Right cardiac atrium (tissue), 5 donors: ENCODE measurements at regions of chr22 and their contacts with region 1.

Region 1: DNA sequence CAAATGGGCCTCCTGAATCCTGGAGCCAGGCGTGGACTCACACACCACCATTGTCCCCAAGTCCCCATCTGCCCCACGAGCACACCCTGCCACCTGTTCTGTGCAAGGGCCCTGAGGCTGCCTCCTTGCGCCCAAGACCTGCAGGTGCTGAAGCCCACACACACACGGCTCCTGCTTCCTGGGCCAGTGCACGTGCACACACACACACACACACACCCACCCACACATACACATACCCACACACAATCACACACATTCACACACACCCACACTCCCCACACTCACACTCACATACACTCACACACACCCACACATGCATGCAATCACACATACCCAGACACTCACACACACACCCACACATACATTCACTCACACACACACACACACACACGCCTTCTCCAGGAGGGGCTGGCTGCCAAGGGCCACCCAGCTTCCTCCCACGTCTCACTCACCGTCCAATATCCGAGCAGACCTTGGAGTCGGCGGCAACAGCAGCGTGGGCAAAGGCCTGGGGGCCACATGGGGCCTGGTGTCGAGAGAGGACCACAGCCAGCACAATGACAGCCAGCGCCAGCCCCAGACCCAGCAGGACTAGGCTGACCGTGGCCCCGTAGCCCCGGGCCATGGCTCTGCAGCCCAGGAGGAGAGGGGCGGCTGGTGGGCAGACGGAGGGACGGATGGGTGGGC is 638 bp downstream of the GGT5 start:
- DNase-seq: peak; percentile 58 to 81 (median 80)
- ATAC-seq: peak; percentile 19 to 40
- H3K4me3 ChIP-seq: peak overlapping the region; percentile 11
- H3K27ac ChIP-seq: peak overlapping the region; percentile 71
- H3K4me1 ChIP-seq: peaks cover 5% of the 10 kb centered on the region
- H3K27me3 ChIP-seq: no peaks in the 10 kb centered on the region

Region 2: DNA sequence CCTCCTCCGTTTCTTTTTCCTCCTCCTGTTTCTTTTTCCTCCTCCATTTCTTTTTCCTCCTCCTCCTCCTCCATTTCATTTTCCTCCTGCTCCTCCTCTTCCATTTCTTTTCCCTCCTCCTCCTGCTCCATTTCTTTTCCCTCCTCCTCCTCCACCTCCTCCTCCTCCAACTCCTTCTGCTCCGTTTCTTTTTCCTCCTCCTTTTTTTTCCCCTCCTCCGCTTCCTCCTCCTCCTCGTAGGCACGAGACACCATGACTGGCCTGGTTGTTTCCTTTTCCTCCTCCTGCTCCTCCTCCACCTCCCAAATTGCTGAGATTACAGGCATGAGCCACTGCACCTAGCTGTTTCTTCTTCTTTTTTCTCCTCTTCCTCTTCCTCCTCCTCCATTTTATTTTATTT is 586.5 kb before region 1 on chr22:
- intact Hi-C with region 1: no loop called
- DNase-seq: no peak
- ATAC-seq: no peak
- H3K4me3 ChIP-seq: no peak overlapping the region
- H3K27ac ChIP-seq: no peak overlapping the region
- H3K4me1 ChIP-seq: no peaks in the 10 kb centered on the region
- H3K27me3 ChIP-seq: no peaks in the 10 kb centered on the region

Region 3: DNA sequence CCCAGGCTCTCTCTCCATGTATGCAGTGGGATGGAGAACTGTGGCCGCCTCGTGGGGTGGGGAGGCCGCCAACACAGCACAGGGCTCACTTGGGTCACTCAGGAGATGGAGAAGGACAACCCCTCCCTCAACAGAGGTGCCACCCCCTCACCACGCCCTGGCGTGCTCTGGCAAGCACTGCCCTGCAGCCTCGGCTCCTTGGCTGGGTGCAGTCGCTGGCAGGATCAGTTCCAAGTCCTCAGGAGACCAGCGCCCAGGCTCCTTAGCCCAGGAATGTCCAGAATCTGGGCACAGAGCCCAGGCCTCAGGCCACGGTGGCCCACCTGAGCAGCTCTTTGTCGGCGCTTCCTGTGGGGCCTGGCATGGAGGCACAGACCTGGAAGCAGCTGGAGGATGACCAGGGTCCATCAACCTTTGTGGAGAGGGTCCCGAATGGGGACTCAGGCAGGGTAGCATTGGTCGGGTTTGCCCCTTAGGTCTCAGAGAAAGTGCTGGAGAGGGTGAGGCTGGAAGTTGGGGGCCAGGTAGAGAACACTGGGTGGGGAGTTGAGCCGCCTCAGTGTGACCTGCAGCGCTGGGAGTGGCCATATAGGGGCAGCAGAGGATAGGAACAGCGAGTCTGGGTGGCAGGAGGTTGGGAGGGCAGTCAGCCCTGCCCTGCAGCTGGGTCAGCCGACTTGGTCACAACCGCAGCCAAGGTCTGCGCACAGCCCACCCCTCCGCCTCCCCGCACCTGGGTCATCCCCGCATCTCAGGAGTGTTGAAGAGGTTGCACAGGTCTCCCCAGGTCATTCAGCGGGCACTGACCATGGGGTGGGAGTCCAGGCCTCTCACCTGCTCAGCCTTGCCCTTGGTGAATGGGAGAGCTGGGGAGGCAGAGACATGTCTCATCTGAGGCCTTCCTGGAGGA is 54.7 kb before region 1 on chr22:
- intact Hi-C with region 1: loop called (anchors 2 to 5 kb)
- DNase-seq: peak; percentile 77 to 92 (median 89)
- ATAC-seq: peak; percentile 87
- H3K4me3 ChIP-seq: no peak overlapping the region
- H3K27ac ChIP-seq: no peak overlapping the region
- H3K4me1 ChIP-seq: no peaks in the 10 kb centered on the region
- H3K27me3 ChIP-seq: no peaks in the 10 kb centered on the region

Region 4: DNA sequence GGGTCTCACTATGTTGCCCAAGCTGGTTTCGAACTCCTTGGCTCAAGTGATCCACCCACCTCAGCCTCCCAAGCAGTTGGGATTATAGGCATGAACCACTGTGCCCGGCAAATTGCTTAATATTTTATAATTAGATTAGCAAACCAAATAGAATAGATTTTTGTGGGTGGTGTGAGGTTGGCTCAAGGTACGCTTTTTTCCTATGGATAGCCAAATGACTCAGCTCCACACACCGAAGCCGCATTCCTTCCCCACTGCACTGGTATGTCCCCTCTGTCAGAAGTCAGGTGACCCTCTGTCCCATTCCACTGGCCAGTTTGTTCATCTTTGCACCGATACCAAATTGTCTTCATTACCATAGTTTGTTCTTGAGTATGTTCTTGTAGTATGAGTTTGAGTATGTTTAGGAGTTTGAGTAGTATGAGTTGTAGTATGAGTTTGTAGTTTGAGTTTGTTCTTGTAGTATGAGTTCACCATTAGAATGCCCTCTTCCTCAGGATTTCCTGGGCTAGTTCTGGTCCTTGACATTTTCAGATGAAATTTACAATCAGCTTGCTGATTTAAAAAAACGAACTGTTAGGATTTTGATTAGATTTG is 43.5 kb before region 1 on chr22:
- intact Hi-C with region 1: loop called in 2 of 4 experiments (anchors 5 kb)
- DNase-seq: no peak
- ATAC-seq: no peak
- H3K4me3 ChIP-seq: no peak overlapping the region
- H3K27ac ChIP-seq: no peak overlapping the region
- H3K4me1 ChIP-seq: peaks cover under 1% of the 10 kb centered on the region
- H3K27me3 ChIP-seq: no peaks in the 10 kb centered on the region